Dendritic cell treated with granulocyte-macrophage colony-stimulating factor and Interleukin-4, amounts not matched to agents 40 ng/mL and 50 ng/mL, for 4 days (primary cell): ENCODE measurements at regions of chr10 and their contacts with region 1.

Region 1: DNA sequence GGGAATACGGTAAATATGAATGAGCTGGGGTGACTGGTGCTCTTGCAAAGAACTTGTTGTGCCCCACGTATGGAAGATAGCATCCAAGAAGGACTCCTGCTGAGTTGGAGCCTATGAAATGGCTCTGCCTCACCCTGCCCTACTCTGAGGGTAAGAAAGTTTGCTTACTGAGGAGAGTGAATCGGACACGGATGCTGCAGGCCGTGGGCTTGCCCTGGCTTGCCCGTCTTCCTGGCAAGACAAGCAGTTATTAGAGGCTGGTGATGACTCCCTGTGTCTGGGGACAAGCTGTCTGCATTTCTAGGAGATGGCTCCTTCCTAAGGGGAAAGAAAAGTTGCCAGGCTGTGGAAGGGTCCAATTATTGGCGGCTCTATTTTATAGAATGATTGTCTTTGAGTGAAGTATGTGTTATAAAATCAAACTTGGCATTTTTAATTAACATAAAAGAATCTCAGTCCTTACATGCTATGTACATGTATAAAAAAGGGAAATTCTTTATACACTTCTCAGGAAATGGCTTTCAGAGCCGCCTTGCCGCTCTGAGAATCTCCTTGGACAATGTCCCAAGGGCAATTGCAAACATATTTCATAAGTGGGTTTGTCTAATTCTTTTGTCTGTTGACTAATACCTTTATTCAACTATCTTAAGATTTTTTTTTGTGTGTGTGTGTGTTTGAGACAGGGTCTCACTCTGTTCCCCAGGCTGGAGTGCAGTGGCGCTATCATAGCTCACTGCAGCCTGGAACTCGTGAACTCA is 64.6 kb downstream of the CYP26A1 start:
- H3K4me3 Mint-ChIP-seq: no peak overlapping the region
- H3K27ac Mint-ChIP-seq: no peak overlapping the region
- H3K4me1 Mint-ChIP-seq: peaks cover 27% of the 10 kb centered on the region
- H3K27me3 Mint-ChIP-seq: peaks cover 81% of the 10 kb centered on the region

Region 2: GRCh38 chr10:93173967-93174845 is 35.9 kb after region 1 on chr10:
- intact Hi-C with region 1: loop called (anchors 5 kb)
- H3K4me3 Mint-ChIP-seq: no peak overlapping the region
- H3K27ac Mint-ChIP-seq: no peak overlapping the region
- H3K4me1 Mint-ChIP-seq: no peaks in the 10 kb centered on the region
- H3K27me3 Mint-ChIP-seq: peaks cover 54% of the 10 kb centered on the region

Region 3: GRCh38 chr10:93199191-93199751 is 61.0 kb after region 1 on chr10:
- intact Hi-C with region 1: loop called (anchors 5 kb)
- H3K4me3 Mint-ChIP-seq: peak overlapping the region; percentile 53
- H3K27ac Mint-ChIP-seq: no peak overlapping the region
- H3K4me1 Mint-ChIP-seq: peaks cover 23% of the 10 kb centered on the region
- H3K27me3 Mint-ChIP-seq: peaks cover 32% of the 10 kb centered on the region